ENCODE measurements at regions of chr1 and their contacts with region 1.

Region 1: GRCh38 chr1:173867753-173868265 is at the start of gene GAS5:
- DNase-seq: peak; percentile 100
- H3K4me3 Mint-ChIP-seq: peak within 1 kb of the TSS; percentile 99
- H3K27ac Mint-ChIP-seq: peak within 1 kb of the TSS; percentile 98
- H3K4me1 Mint-ChIP-seq: peaks cover 68% of the 10 kb centered on the region
- H3K27me3 Mint-ChIP-seq: peaks cover 3% of the 10 kb centered on the region
- total RNA-seq, gene GAS5: 913 to 929 TPM

Region 2: GRCh38 chr1:173714759-173715537 is 152.9 kb before region 1 on chr1 and contains the start of gene KLHL20:
- CTCF ChIA-PET with region 1: no interaction called
- POLR2A ChIA-PET with region 1: interaction called, 5 read pairs
- intact Hi-C with region 1: loop called (anchors 1 kb)
- DNase-seq: peak; percentile 92
- H3K4me3 Mint-ChIP-seq: peak within 1 kb of the TSS; percentile 96
- H3K27ac Mint-ChIP-seq: peak within 1 kb of the TSS; percentile 92
- H3K4me1 Mint-ChIP-seq: peaks cover 31% of the 10 kb centered on the region
- H3K27me3 Mint-ChIP-seq: peaks cover 14% of the 10 kb centered on the region
- total RNA-seq, gene KLHL20: 12.9 to 14.9 TPM

Region 3: DNA sequence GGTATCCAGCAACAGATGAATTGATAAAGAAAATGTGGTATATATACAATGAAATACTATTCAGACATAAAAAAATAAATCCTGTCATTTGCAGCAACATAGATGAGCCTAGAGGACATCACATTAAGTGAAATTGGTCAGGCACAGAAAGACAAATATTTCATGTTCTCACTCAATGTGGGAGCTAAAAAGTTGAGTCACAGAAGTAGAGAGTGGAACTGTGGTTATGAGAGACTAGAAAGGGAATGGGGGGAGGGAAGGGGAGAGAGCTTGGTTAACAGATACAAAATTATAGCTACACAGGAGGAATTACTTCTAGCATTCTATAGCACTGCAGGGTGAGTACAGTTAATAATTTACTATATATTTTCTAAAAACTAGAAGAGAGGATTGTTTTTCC is 86.4 kb after region 1 on chr1:
- CTCF ChIA-PET with region 1: no interaction called
- POLR2A ChIA-PET with region 1: no interaction called
- intact Hi-C with region 1: loop called (anchors 5 kb)
- DNase-seq: no peak
- H3K4me3 Mint-ChIP-seq: no peak overlapping the region
- H3K27ac Mint-ChIP-seq: no peak overlapping the region
- H3K4me1 Mint-ChIP-seq: peaks cover 15% of the 10 kb centered on the region
- H3K27me3 Mint-ChIP-seq: no peaks in the 10 kb centered on the region

Region 4: DNA sequence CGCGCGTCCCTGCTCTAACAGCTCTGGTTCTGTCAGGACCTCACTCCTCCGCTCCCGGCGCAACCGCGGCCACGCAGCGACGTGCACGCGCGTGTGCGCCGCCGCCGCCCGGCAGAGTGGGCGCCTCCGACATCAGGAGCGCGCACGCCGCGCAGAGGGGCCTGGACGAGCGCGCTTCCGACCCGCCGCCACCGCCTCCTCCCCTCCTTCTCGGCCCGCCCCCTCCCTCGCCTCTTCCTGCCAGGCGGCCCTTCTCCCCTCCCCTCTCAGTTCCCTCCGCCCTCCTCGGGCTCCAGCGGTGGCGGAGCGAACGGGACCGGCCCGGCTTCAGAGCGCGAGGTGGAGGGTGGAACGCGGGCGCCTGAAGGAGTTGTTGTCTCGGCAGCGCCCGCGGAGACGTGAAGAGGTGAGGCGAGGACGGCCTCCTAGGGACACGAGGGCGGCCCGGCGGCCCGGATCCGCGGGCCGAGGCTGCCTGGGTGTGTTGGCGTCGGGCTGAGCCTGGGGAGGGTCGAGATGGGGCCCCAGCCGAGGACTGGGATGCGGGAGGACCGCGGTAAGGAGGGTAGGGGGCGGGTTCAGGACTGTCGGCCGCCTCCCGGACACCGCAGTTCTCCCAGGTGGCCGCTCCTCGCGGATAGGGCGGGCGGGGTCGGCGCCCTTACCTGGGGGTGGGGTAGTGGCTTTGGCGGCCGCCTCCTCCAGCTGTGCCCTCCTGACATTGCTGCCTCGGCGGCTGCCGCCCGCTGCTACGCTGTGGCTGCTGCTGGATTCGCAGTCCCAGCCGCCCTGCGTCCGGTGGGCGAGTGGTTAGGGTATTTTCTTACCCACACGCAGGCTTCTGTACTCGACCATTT is 291.7 kb after region 1 on chr1 and contains the start of gene RABGAP1L:
- CTCF ChIA-PET with region 1: no interaction called
- POLR2A ChIA-PET with region 1: no interaction called
- intact Hi-C with region 1: loop called (anchors 1 kb)
- DNase-seq: peak; percentile 95
- H3K4me3 Mint-ChIP-seq: peak within 1 kb of the TSS; percentile 99
- H3K27ac Mint-ChIP-seq: peak within 1 kb of the TSS; percentile 94
- H3K4me1 Mint-ChIP-seq: peaks cover 60% of the 10 kb centered on the region
- H3K27me3 Mint-ChIP-seq: no peaks in the 10 kb centered on the region
- total RNA-seq, gene RABGAP1L: 30.5 to 30.9 TPM